H1 (cell line): ENCODE measurements at regions of chr12 and their contacts with region 1.

Region 1: DNA sequence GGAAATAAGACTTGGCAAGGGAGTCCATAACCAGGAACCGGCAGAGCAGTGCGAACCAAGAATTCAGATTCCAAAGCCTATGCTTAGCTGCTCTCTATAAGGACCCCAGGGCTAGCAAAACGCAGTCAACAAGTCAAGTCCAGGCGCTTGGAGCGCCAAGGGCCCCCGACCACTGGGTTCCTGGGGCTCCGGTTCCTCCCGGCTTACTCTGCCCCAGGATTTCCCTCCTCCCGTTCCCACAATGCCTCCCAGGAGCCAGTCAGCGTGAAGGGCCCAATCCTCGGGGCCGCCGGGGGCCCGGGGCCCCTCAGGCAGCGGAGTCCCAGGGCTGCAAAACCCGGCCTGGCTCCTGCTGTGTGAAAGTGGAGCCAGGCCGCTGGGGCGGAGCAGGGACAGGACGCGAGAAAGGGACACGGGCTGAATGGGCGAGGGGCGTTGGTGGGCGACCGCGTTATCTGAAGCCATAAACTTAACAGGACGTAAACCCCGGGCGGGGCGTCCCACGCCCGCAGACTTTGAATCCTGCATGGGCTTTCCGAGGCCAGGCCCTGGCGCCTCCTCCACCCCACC is 1.5 kb downstream of the KRT8 start:
- DNase-seq: peak; percentile 61 to 91
- H3K4me3 ChIP-seq: peak overlapping the region; percentile 59 to 100 (median 76)
- H3K27ac ChIP-seq: no peak overlapping the region
- H3K4me1 ChIP-seq: peaks cover 14 to 21% (median 15%) of the 10 kb centered on the region in 4 experiments
- H3K27me3 ChIP-seq: no peaks in the 10 kb centered on the region; a peak in 1 of 7 replicates
- CTCF ChIP-seq: no peak
- EP300 ChIP-seq: peak in 1 of 2 experiments; percentile 53; a peak in 1 of 3 replicates
- POLR2A ChIP-seq: no peak; a peak in 1 of 3 replicates
- RAD21 ChIP-seq: peak in 1 of 2 experiments; percentile 5; a peak in 1 of 4 replicates

Region 2: GRCh38 chr12:52650520-52651081 is 252.8 kb before region 1 on chr12:
- CTCF ChIA-PET with region 1: no interaction called
- POLR2A ChIA-PET with region 1: no interaction called
- DNase-seq: no peak
- H3K4me3 ChIP-seq: no peak overlapping the region
- H3K27ac ChIP-seq: no peak overlapping the region
- H3K4me1 ChIP-seq: no peaks in the 10 kb centered on the region
- H3K27me3 ChIP-seq: no peaks in the 10 kb centered on the region
- CTCF ChIP-seq: no peak
- EP300 ChIP-seq: no peak
- POLR2A ChIP-seq: no peak
- RAD21 ChIP-seq: no peak

Region 3: GRCh38 chr12:52813885-52814711 is 89.3 kb before region 1 on chr12 and contains the start of gene KRT4:
- CTCF ChIA-PET with region 1: no interaction called
- POLR2A ChIA-PET with region 1: no interaction called
- DNase-seq: no peak
- H3K4me3 ChIP-seq: no peak within 1 kb of the TSS
- H3K27ac ChIP-seq: no peak within 1 kb of the TSS
- H3K4me1 ChIP-seq: no peaks in the 10 kb centered on the region
- H3K27me3 ChIP-seq: no peaks in the 10 kb centered on the region
- CTCF ChIP-seq: no peak
- EP300 ChIP-seq: no peak
- POLR2A ChIP-seq: no peak
- RAD21 ChIP-seq: no peak
- total RNA-seq, gene KRT4: not detected in 2 replicates

Region 4: GRCh38 chr12:52924764-52925716 is 21.7 kb after region 1 on chr12:
- CTCF ChIA-PET with region 1: interaction called, 197 read pairs
- POLR2A ChIA-PET with region 1: interaction called, 75 read pairs
- DNase-seq: no peak
- H3K4me3 ChIP-seq: no peak overlapping the region
- H3K27ac ChIP-seq: no peak overlapping the region
- H3K4me1 ChIP-seq: peaks cover 0 to 24% (median 9%) of the 10 kb centered on the region in 4 experiments; a peak in 6 of 7 replicates
- H3K27me3 ChIP-seq: no peaks in the 10 kb centered on the region
- CTCF ChIP-seq: no peak
- EP300 ChIP-seq: no peak
- POLR2A ChIP-seq: no peak
- RAD21 ChIP-seq: no peak

Region 5: DNA sequence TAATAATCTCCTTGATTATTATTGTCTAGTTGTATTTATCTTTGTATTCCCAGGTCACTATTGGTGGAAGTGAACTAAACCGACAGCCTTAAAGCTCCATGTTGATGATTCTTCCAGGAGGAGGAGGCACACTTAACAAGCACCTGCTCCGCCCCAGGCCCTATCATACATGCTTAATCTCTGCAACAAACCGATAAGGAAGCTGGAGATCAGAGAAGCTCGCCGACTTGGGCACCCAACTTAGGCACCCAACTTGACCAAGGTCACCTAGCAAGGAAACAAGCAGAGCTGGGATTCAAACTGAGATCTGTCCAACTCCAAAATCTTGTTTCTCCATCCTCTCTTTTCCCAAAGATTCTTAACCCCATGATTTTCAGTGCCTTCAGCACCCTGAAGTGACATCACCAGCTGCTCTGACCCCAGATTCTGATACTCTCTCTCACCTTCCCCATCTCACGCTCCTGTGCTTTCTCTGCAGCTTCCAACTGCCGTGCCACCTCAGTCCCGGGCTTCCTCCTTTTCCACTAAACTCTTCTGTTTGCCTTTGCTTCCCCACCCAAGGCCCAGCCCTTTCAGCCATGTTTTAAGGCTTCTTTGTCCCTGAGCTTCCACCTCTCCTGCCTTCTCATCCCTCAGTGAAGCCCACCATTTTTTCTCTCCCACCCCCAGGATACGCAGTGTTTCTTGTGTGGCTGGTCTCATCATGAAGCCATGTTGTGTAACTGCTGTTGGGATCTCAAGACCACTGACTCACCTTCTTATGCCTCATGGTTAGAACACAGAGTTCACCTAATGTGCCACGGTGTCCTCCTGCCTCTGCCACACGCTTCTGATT is 38.9 kb after region 1 on chr12:
- CTCF ChIA-PET with region 1: interaction called, 314 read pairs
- POLR2A ChIA-PET with region 1: interaction called, 297 read pairs
- DNase-seq: no peak
- H3K4me3 ChIP-seq: no peak overlapping the region
- H3K27ac ChIP-seq: no peak overlapping the region
- H3K4me1 ChIP-seq: peaks cover 12 to 30% (median 23%) of the 10 kb centered on the region in 4 experiments
- H3K27me3 ChIP-seq: no peaks in the 10 kb centered on the region
- CTCF ChIP-seq: no peak
- EP300 ChIP-seq: no peak
- POLR2A ChIP-seq: no peak
- RAD21 ChIP-seq: no peak

Region 6: GRCh38 chr12:52949413-52950331 is 46.3 kb after region 1 on chr12:
- CTCF ChIA-PET with region 1: interaction called, 314 read pairs
- POLR2A ChIA-PET with region 1: interaction called, 297 read pairs
- DNase-seq: peak in 1 of 2 experiments; percentile 62
- H3K4me3 ChIP-seq: peak overlapping the region; percentile 88 to 98 (median 93)
- H3K27ac ChIP-seq: peak overlapping the region; percentile 83
- H3K4me1 ChIP-seq: peaks cover 18 to 38% (median 29%) of the 10 kb centered on the region in 4 experiments
- H3K27me3 ChIP-seq: no peaks in the 10 kb centered on the region
- CTCF ChIP-seq: no peak
- EP300 ChIP-seq: no peak
- POLR2A ChIP-seq: peak; percentile 73 to 85
- RAD21 ChIP-seq: peak in 1 of 2 experiments; percentile 3; a peak in 1 of 4 replicates

Region 7: DNA sequence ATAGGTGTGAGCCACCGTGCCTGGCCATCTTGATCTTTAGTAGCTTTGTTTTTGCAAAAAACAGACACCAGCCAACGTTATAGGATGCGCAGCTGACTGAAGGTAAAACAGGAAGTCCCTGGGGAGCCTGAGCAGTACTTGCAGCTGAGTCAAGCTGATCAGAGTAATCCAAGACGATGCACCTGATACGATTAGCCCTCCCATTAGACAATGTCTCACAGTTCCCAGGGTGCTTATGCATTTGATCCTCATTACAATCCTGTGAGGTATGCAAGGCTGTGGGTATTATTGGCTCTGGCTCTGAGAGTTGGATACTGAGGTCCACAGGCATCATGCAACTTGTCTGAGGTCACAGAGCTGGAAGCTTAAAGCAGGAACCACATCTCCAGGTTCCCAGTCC is 53.6 kb after region 1 on chr12:
- CTCF ChIA-PET with region 1: interaction called, 314 read pairs
- POLR2A ChIA-PET with region 1: interaction called, 297 read pairs
- DNase-seq: no peak
- H3K4me3 ChIP-seq: no peak overlapping the region
- H3K27ac ChIP-seq: no peak overlapping the region
- H3K4me1 ChIP-seq: no peaks in the 10 kb centered on the region; a peak in 1 of 7 replicates
- H3K27me3 ChIP-seq: no peaks in the 10 kb centered on the region
- CTCF ChIP-seq: no peak
- EP300 ChIP-seq: no peak
- POLR2A ChIP-seq: no peak
- RAD21 ChIP-seq: no peak

Region 8: GRCh38 chr12:52969828-52970569 is 66.6 kb after region 1 on chr12:
- CTCF ChIA-PET with region 1: interaction called, 19 read pairs
- POLR2A ChIA-PET with region 1: interaction called, 9 read pairs
- DNase-seq: no peak
- H3K4me3 ChIP-seq: no peak overlapping the region
- H3K27ac ChIP-seq: no peak overlapping the region
- H3K4me1 ChIP-seq: peaks cover 4 to 10% (median 7%) of the 10 kb centered on the region in 4 experiments
- H3K27me3 ChIP-seq: peaks cover 0 to 9% (median 5%) of the 10 kb centered on the region in 4 experiments; a peak in 3 of 7 replicates
- CTCF ChIP-seq: no peak
- EP300 ChIP-seq: no peak
- POLR2A ChIP-seq: no peak
- RAD21 ChIP-seq: no peak